Right cardiac atrium (tissue), 5 donors: ENCODE measurements at regions of chr9 and their contacts with region 1.

Region 1: DNA sequence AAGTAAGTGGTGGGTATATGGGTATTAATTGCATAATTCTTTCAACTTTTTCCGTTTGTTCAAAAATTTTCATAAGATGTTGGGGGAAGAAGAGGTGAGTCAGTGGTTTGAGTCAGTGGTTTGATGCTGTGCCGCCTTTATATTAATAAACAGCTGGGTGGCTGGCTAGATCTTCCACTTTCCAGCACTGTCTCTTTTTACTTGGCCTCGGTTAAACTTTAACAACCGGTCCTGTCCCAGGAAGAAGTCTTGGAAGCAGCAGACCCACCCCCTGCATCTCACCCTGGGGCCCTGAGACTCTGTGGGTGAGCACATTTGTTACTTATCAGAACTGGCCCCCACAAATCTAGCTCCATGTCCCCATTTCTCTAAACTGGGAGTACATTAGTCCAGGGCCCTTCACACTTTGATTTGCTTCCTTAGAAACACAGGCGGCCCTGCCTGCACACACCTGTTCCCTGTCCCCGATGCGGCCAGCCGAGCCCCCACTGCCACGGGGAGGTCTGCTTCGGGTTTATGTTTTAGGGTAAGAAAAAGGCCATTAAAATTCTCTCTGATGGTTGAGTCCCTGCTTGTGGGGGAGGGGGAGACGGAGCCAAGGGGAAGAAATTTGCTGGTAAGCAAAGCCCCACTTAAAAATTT is 90.7 kb downstream of the PTCH1 start:
- DNase-seq: no peak
- ATAC-seq: no peak
- H3K4me3 ChIP-seq: peak overlapping the region; percentile 53
- H3K27ac ChIP-seq: no peak overlapping the region
- H3K4me1 ChIP-seq: no peaks in the 10 kb centered on the region
- H3K27me3 ChIP-seq: no peaks in the 10 kb centered on the region

Region 2: DNA sequence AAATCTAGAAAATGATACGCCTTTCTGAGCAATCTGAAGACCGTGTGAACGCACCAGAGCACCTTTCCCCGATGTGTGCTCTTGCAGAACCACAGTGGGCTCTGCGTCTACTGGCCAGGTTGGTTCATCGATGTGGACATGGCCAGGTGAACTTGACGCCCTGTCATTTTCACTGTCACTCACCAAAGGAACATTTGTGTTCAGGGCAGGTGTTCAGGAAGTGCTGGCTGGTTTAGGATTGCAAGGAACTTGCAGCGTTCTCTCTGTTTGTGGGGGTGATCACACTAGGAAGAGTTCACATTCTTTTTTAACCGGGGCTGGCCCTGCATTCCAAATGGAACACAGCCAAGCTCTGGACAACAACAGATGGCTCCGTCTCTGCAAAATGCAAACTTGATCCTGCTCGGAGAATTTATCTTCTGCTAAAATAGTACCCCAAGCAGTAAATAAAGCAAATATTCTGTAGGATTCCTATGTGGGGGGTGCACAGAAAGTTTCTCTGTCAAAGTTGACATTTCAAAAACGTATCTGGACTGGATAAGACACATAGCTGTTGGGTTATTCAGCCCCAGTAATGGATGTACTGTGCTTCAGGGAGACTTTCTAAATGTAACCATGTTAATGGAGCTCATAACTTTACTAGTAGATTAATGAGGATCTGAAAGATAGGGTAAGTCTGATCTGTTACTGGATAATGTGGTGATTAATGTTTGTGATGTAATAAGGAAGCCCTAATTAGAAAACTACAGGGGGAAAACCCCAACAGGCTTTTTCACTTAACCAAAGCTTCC is 62.8 kb before region 1 on chr9:
- intact Hi-C with region 1: loop called in 1 of 4 experiments (anchors 10 kb)
- DNase-seq: no peak
- ATAC-seq: no peak
- H3K4me3 ChIP-seq: peak overlapping the region; percentile 27
- H3K27ac ChIP-seq: no peak overlapping the region
- H3K4me1 ChIP-seq: no peaks in the 10 kb centered on the region
- H3K27me3 ChIP-seq: no peaks in the 10 kb centered on the region